Lower lobe of right lung (tissue), 2 donors: ENCODE measurements at regions of chr11 and their contacts with region 1.

Region 1: GRCh38 chr11:30917859-30918478 is 331.8 kb upstream of the MPPED2 start:
- DNase-seq: no peak
- ATAC-seq: peak in 1 of 2 donors; percentile 65
- H3K4me3 ChIP-seq: no peak overlapping the region
- H3K27ac ChIP-seq: no peak overlapping the region
- H3K4me1 ChIP-seq: no peaks in the 10 kb centered on the region
- H3K27me3 ChIP-seq: no peaks in the 10 kb centered on the region
- CTCF ChIP-seq: peak; percentile 68

Region 2: DNA sequence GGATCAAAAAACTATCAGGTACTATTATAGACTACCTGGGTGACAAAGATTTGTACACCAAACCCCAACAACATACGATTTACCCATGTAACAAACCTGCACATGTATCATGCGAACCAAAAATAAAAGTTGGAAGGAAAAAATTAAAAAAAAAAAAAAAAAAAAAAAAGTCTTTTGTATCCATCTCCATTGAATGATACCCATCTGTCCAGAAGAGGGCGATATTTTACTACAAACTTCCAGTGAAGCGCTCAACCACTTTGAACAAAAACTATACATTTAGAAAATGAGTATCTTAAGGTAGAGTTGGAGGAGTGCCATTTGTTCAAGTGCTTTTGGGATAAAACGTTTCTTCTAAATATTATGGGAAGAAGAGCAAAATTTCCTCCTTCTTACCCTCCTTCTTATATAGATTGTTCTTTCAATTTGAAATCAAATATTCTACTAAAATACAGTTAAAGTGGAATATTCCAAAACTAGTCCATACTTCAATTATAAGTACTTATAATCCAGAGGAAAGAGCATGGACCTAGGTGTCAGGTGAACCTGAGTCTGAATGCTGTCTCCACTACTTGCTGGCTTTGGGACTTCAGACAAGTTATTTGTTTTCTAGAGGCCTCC is 571.8 kb before region 1 on chr11:
- intact Hi-C with region 1: loop called (anchors 10 kb)
- DNase-seq: no peak
- ATAC-seq: peak in 1 of 2 donors; percentile 53
- H3K4me3 ChIP-seq: no peak overlapping the region
- H3K27ac ChIP-seq: no peak overlapping the region
- H3K4me1 ChIP-seq: no peaks in the 10 kb centered on the region
- H3K27me3 ChIP-seq: no peaks in the 10 kb centered on the region
- CTCF ChIP-seq: peak; percentile 65